GM12878 (cell line): ENCODE measurements at regions of chr2 and their contacts with region 1.

Region 1: GRCh38 chr2:112075490-112076260 is 20.6 kb downstream of the TMEM87B start:
- DNase-seq: no peak
- ATAC-seq: peak; percentile 41
- H3K4me3 ChIP-seq: no peak overlapping the region
- H3K27ac ChIP-seq: peak overlapping the region; percentile 67; the same call in 1 of the 2 replicates
- H3K4me1 ChIP-seq: peaks cover 9% of the 10 kb centered on the region
- H3K27me3 ChIP-seq: no peaks in the 10 kb centered on the region
- CTCF ChIP-seq: no peak
- EP300 ChIP-seq: no peak
- POLR2A ChIP-seq: no peak
- RAD21 ChIP-seq: no peak

Region 2: DNA sequence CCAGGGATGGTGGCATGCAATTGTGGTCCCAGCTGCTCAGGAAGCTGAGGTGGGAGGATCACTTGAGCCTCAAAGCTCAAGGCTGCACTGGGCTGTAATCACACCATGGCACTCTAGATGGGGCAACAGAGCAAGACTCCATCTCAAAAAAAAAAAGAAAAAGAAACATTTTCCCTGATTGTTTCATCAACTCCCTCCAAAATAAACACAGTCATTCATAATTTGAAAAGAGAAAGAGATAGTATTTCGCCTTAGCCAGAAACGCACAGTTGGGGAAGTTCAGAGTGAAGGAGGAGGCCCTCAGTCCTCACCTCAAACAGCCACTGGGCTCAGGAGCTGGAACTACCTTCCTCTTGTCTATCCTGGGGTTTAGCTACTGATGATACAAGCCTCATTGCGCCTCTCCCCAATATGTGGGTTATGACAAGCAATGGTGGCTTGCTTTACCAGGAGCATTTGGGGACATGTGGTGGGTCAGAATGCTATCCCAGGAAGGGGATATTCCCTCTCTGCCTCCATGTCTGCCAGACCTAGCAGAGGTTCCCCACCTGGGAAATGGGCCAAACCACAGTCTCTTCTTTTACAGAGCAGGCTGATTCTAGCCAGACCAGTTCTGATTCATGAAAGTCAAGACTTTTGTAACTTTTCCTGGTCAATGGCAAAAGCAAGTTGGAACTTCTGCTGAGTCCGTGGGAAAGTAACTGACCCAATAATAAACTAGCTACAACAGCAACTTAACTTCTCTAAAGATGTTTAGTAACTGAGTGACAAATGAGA is 42.8 kb before region 1 on chr2:
- CTCF ChIA-PET with region 1: no interaction called
- POLR2A ChIA-PET with region 1: no interaction called
- RAD21 ChIA-PET with region 1: no interaction called
- SMC1A ChIA-PET with region 1: no interaction called
- in situ Hi-C with region 1: no loop called
- intact Hi-C with region 1: no loop called
- DNase-seq: no peak
- ATAC-seq: peak; percentile 44; the same call in 2 of the 3 replicates
- H3K4me3 ChIP-seq: no peak overlapping the region
- H3K27ac ChIP-seq: no peak overlapping the region
- H3K4me1 ChIP-seq: no peaks in the 10 kb centered on the region
- H3K27me3 ChIP-seq: no peaks in the 10 kb centered on the region
- CTCF ChIP-seq: no peak
- EP300 ChIP-seq: no peak
- POLR2A ChIP-seq: no peak
- RAD21 ChIP-seq: no peak

Region 3: GRCh38 chr2:112062894-112063293 is 12.8 kb before region 1 on chr2:
- CTCF ChIA-PET with region 1: interaction called, 4 read pairs
- POLR2A ChIA-PET with region 1: interaction called, 4 read pairs
- RAD21 ChIA-PET with region 1: no interaction called
- SMC1A ChIA-PET with region 1: interaction called, 10 read pairs
- in situ Hi-C with region 1: no loop called
- intact Hi-C with region 1: no loop called
- DNase-seq: no peak
- ATAC-seq: peak; percentile 48
- H3K4me3 ChIP-seq: no peak overlapping the region
- H3K27ac ChIP-seq: no peak overlapping the region
- H3K4me1 ChIP-seq: peaks cover 24% of the 10 kb centered on the region
- H3K27me3 ChIP-seq: no peaks in the 10 kb centered on the region
- CTCF ChIP-seq: no peak
- EP300 ChIP-seq: no peak
- POLR2A ChIP-seq: no peak
- RAD21 ChIP-seq: no peak

Region 4: GRCh38 chr2:112138159-112138773 is 62.6 kb after region 1 on chr2 and contains the start of gene FBLN7:
- CTCF ChIA-PET with region 1: no interaction called
- POLR2A ChIA-PET with region 1: no interaction called
- RAD21 ChIA-PET with region 1: no interaction called
- SMC1A ChIA-PET with region 1: no interaction called
- in situ Hi-C with region 1: no loop called
- intact Hi-C with region 1: no loop called
- DNase-seq: no peak
- ATAC-seq: no peak; the same call in 1 of the 3 replicates
- H3K4me3 ChIP-seq: no peak within 1 kb of the TSS
- H3K27ac ChIP-seq: no peak within 1 kb of the TSS
- H3K4me1 ChIP-seq: no peaks in the 10 kb centered on the region
- H3K27me3 ChIP-seq: peaks cover 1 to 8% of the 10 kb centered on the region in 2 experiments; a peak in 2 of 4 replicates
- CTCF ChIP-seq: no peak
- EP300 ChIP-seq: no peak
- POLR2A ChIP-seq: no peak
- RAD21 ChIP-seq: no peak
- polyA plus RNA-seq, gene FBLN7: not detected